Activated CD8-positive, alpha-beta T cell treated with anti-CD3 and anti-CD28 coated beads, Interleukin-2, amount 10 ng/mL, durations not matched to agents 7 days and 5 days (primary cell): ENCODE measurements at regions of chr12 and their contacts with region 1.

Region 1: DNA sequence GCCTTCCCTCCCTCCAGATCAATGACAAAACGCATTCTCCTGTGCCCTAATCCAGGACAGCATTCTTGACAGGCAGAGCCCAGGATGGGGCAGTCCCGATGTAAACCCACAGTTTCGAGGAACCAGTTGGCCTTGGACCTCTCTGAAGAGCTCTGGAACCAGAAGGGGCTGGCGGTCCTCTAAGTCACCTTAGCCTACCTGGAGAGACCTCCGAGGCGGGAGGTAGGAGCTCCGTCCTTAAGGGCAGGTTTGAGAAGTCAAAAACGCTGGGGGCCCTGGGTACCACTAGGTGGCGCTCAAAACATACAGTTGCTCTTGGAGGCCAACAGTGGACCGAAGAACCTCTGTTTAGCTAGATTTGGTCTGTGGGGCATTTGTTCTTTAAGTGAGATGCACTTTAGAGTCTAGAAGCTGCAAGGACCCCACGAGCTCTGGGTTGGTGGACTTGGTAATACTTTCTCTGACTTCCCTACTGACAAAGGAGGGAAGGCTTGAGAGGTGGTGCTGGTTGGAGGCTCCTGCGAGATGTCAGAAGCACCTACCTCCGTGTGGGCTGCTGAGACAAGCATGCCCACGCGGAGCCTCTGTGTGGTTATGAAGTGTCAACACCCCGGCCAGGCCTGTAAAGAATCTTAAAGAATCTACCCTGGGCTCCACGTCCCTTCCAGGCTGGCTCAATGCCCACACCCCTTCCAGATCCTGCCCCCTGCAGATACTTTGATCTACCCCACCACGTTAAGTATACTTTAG is 74.8 kb upstream of the CHST11 start:
- DNase-seq: peak; percentile 90
- ATAC-seq: peak; percentile 90
- H3K4me3 Mint-ChIP-seq: no peak overlapping the region
- H3K27ac Mint-ChIP-seq: no peak overlapping the region
- H3K4me1 Mint-ChIP-seq: peaks cover 18% of the 10 kb centered on the region
- H3K27me3 Mint-ChIP-seq: peaks cover 9% of the 10 kb centered on the region

Region 2: DNA sequence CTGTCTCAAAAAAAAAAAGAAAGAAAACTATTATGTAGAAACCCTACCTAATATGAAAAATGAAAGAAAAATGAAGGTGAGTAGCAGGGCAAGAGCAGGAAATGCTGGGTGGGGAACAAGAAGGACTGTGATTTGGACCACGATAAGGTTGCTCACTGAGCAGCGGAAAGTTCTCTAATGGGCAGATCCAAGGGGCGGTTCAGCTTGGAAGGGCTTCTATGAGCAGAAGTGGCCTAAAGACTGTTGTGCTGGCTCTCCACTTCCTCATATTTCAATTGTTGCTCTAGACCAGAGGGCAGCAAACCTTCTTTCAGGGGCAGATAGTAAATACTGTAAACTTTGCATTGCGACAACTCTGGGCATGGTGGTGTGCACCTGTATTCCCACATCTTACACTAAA is 227.6 kb before region 1 on chr12:
- CTCF ChIA-PET with region 1: no interaction called
- POLR2A ChIA-PET with region 1: no interaction called
- DNase-seq: no peak
- ATAC-seq: no peak
- H3K4me3 Mint-ChIP-seq: no peak overlapping the region
- H3K27ac Mint-ChIP-seq: no peak overlapping the region
- H3K4me1 Mint-ChIP-seq: peaks cover 9% of the 10 kb centered on the region
- H3K27me3 Mint-ChIP-seq: peaks cover 8% of the 10 kb centered on the region

Region 3: GRCh38 chr12:104456417-104456949 is 74.6 kb after region 1 on chr12 and contains the start of gene CHST11:
- CTCF ChIA-PET with region 1: interaction called, 31 read pairs
- POLR2A ChIA-PET with region 1: interaction called, 6 read pairs
- DNase-seq: peak; percentile 81
- ATAC-seq: peak; percentile 71
- H3K4me3 Mint-ChIP-seq: peak within 1 kb of the TSS; percentile 99
- H3K27ac Mint-ChIP-seq: peak within 1 kb of the TSS; percentile 96
- H3K4me1 Mint-ChIP-seq: peaks cover 41% of the 10 kb centered on the region
- H3K27me3 Mint-ChIP-seq: peaks cover 2% of the 10 kb centered on the region
- total RNA-seq, gene CHST11: 82.1 to 85.2 TPM

Region 4: DNA sequence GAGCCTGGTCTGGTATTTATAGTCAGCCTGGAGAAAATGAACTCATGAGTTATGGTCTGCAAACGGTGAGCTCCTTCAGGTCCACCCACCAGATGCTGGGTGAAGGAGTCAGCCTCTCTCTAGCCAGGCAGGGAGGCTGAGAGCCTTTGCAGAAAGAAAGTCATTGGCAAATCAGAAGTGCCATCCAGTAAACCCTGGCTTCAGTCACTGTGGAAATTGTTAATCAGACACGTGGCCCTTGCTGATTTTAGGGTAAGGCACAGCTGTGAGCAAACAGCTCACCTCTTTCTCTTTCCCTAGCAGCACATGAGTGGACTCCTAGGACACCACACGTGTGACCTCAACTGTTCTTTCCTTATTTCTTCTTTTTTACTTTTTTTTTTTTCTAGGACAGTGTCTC is 119.8 kb after region 1 on chr12:
- CTCF ChIA-PET with region 1: interaction called, 13 read pairs
- POLR2A ChIA-PET with region 1: no interaction called
- DNase-seq: no peak
- ATAC-seq: peak; percentile 23
- H3K4me3 Mint-ChIP-seq: no peak overlapping the region
- H3K27ac Mint-ChIP-seq: no peak overlapping the region
- H3K4me1 Mint-ChIP-seq: peaks cover 94% of the 10 kb centered on the region
- H3K27me3 Mint-ChIP-seq: no peaks in the 10 kb centered on the region

Region 5: DNA sequence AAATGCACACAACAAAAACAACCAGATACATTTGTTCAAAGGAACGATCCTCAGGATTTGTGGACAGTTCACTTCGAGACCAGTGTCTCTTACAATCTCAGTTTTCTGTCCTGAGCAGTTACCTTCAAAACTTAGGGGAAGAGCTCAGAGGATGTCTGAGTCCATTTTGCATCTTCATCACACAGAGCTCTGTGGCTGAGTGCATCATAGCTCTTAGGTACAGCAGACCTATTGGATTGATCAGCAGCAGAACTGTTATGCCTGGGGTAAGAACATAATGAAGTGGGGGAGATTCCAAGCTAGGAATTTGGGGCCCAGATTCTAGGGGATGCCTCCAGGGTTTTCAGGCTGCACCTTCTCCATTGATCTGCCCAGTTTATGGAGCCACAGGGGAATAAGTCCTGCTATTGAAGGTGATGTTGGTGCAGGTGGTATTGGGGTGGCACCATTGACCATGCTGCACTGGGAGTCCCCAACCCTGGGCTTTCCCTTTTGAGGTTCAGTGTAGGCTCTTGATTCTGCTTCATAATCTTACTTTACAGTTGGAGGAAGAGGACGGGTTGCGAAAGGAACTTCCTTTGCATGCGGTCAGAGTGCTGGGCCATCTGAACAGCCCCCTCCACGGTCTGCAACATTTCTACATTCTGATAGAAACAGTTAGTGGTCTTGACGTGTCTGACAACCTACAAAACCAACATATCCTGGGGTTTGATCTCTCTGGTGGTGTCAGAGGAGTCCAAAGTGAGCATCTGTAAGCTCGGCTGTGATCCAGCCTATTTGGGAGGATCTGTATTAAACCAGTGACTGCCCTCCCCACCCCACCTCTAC is 187.7 kb after region 1 on chr12:
- CTCF ChIA-PET with region 1: interaction called, 41 read pairs
- POLR2A ChIA-PET with region 1: interaction called, 3 read pairs
- DNase-seq: peak; percentile 87
- ATAC-seq: peak; percentile 83
- H3K4me3 Mint-ChIP-seq: peak overlapping the region; percentile 45
- H3K27ac Mint-ChIP-seq: peak overlapping the region; percentile 86
- H3K4me1 Mint-ChIP-seq: peaks cover 71% of the 10 kb centered on the region
- H3K27me3 Mint-ChIP-seq: no peaks in the 10 kb centered on the region

Region 6: GRCh38 chr12:104671407-104672098 is 289.6 kb after region 1 on chr12:
- CTCF ChIA-PET with region 1: interaction called, 11 read pairs
- POLR2A ChIA-PET with region 1: interaction called, 3 read pairs
- DNase-seq: peak; percentile 73
- ATAC-seq: peak; percentile 63
- H3K4me3 Mint-ChIP-seq: peak overlapping the region; percentile 65
- H3K27ac Mint-ChIP-seq: peak overlapping the region; percentile 88
- H3K4me1 Mint-ChIP-seq: peaks cover 60% of the 10 kb centered on the region
- H3K27me3 Mint-ChIP-seq: no peaks in the 10 kb centered on the region

Region 7: GRCh38 chr12:104958009-104958945 is 576.4 kb after region 1 on chr12 and contains the start of gene SLC41A2:
- CTCF ChIA-PET with region 1: interaction called, 15 read pairs
- POLR2A ChIA-PET with region 1: no interaction called
- DNase-seq: peak; percentile 74
- ATAC-seq: peak; percentile 90
- H3K4me3 Mint-ChIP-seq: peak within 1 kb of the TSS; percentile 88
- H3K27ac Mint-ChIP-seq: peak within 1 kb of the TSS; percentile 75
- H3K4me1 Mint-ChIP-seq: peaks cover 19% of the 10 kb centered on the region
- H3K27me3 Mint-ChIP-seq: peaks cover 50% of the 10 kb centered on the region
- total RNA-seq, gene SLC41A2: 2.0 to 2.9 TPM